ENCODE measurements at regions of chr13 and their contacts with region 1.

Region 1: DNA sequence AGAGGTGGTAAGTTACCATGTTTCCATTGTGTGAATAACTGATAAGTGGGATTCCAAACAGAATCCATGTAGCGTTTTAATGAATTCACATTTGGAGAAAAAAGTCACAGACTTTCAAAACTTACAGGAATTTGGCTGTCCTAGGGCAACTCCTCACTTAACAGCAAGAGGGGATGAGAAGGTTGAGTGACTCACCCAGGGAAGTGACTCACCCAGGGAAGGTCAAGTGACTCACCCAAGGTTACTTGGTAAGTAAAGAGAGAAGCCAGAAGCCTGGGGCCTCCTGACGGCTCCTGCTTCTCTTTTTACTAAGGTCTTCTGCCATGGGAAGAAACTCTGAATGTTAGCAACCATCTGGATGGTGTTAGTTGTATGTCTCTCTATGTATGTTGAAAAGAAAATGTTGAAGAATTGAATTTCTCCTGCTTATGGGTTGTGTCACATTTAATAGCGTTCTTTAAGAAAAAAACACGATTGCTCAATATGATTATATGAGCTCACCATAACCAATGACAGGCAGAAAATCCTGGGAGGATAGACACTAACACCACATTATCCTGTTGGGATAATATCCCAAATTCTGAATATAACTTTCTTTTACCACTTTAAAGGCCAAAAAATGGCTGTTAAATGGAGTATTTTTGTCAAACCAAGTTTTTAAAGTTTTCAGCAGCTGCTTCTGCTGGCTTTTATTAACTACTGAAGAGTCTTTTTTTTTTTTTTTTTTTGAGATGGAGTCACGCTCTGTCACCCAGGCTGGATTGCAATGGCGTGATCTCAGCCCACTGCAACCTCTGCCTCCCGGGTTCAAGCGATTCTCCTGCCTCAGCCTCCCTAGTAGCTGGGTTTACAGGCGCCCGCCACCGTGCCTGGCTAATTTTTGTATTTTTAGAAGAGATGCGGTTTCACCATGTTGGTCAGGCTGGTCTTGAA is 195.6 kb downstream of the GGACT start:
- DNase-seq: peak; percentile 97
- H3K4me3 ChIP-seq: no peak overlapping the region
- H3K27ac ChIP-seq: peak overlapping the region; percentile 72
- H3K4me1 ChIP-seq: peaks cover 49% of the 10 kb centered on the region
- H3K27me3 ChIP-seq: no peaks in the 10 kb centered on the region
- CTCF ChIP-seq: no peak

Region 2: DNA sequence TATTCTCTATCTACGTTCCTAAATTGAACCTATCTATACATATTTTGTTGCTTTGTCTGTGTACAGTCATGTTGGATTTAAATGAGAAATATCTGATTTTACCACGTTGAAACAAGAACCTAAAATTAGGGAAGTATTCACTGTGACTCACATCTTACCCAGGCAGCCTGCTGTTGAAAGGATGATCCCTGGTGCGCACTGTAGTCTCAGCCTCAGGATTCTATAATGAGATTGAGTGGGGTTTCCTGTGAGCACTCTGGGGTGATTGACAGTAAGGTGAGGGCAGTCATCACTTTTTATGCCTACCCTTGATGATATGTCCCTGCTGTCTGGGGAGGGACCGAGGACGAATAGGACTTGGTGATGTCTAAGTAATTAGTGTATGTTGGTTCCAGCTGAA is 268.7 kb before region 1 on chr13:
- CTCF ChIA-PET with region 1: no interaction called
- POLR2A ChIA-PET with region 1: no interaction called
- intact Hi-C with region 1: no loop called
- DNase-seq: peak; percentile 90
- H3K4me3 ChIP-seq: no peak overlapping the region
- H3K27ac ChIP-seq: no peak overlapping the region
- H3K4me1 ChIP-seq: peaks cover 21% of the 10 kb centered on the region
- H3K27me3 ChIP-seq: no peaks in the 10 kb centered on the region
- CTCF ChIP-seq: no peak

Region 3: GRCh38 chr13:100306030-100306429 is 86.9 kb before region 1 on chr13:
- CTCF ChIA-PET with region 1: no interaction called
- POLR2A ChIA-PET with region 1: no interaction called
- intact Hi-C with region 1: loop called (anchors 2 kb)
- DNase-seq: peak; percentile 26
- H3K4me3 ChIP-seq: peak overlapping the region; percentile 34
- H3K27ac ChIP-seq: peak overlapping the region; percentile 98
- H3K4me1 ChIP-seq: peaks cover 52% of the 10 kb centered on the region
- H3K27me3 ChIP-seq: no peaks in the 10 kb centered on the region
- CTCF ChIP-seq: no peak

Region 4: GRCh38 chr13:100523411-100523810 is 130.4 kb after region 1 on chr13:
- CTCF ChIA-PET with region 1: no interaction called
- POLR2A ChIA-PET with region 1: interaction called, 10 read pairs
- intact Hi-C with region 1: no loop called
- DNase-seq: no peak
- H3K4me3 ChIP-seq: no peak overlapping the region
- H3K27ac ChIP-seq: peak overlapping the region; percentile 93
- H3K4me1 ChIP-seq: peaks cover 56% of the 10 kb centered on the region
- H3K27me3 ChIP-seq: no peaks in the 10 kb centered on the region
- CTCF ChIP-seq: no peak

Region 5: GRCh38 chr13:100848304-100848703 is 455.3 kb after region 1 on chr13:
- CTCF ChIA-PET with region 1: no interaction called
- POLR2A ChIA-PET with region 1: no interaction called
- intact Hi-C with region 1: no loop called
- DNase-seq: peak; percentile 26
- H3K4me3 ChIP-seq: no peak overlapping the region
- H3K27ac ChIP-seq: no peak overlapping the region
- H3K4me1 ChIP-seq: no peaks in the 10 kb centered on the region
- H3K27me3 ChIP-seq: no peaks in the 10 kb centered on the region
- CTCF ChIP-seq: peak; percentile 45